Gastrocnemius medialis (tissue), 4 donors: ENCODE measurements at regions of chr2 and their contacts with region 1.

Region 1: GRCh38 chr2:120343433-120344105 is 2.4 kb upstream of the INHBB start:
- DNase-seq: peak; percentile 76 to 83
- ATAC-seq: peak; percentile 69 to 70
- H3K4me3 ChIP-seq: peak overlapping the region; percentile 58 to 75 (median 60)
- H3K27ac ChIP-seq: peak overlapping the region in 3 of 4 donors; percentile 52 to 79 (median 63)
- H3K4me1 ChIP-seq: peaks cover 17 to 25% of the 10 kb centered on the region in 2 donors
- H3K27me3 ChIP-seq: peaks cover 23 to 39% (median 38%) of the 10 kb centered on the region in 3 donors
- CTCF ChIP-seq: peak; percentile 89 to 94 (median 93)
- POLR2A ChIP-seq: no peak

Region 2: GRCh38 chr2:119943058-119943457 is 400.5 kb before region 1 on chr2:
- in situ Hi-C with region 1: no loop called
- intact Hi-C with region 1: no loop called
- DNase-seq: no peak
- ATAC-seq: no peak
- H3K4me3 ChIP-seq: no peak overlapping the region
- H3K27ac ChIP-seq: no peak overlapping the region
- H3K4me1 ChIP-seq: peaks cover 21 to 28% of the 10 kb centered on the region in 2 donors
- H3K27me3 ChIP-seq: no peaks in the 10 kb centered on the region
- CTCF ChIP-seq: no peak
- POLR2A ChIP-seq: no peak

Region 3: GRCh38 chr2:120419073-120419472 is 75.5 kb after region 1 on chr2:
- in situ Hi-C with region 1: no loop called
- intact Hi-C with region 1: loop called (anchors 2 kb)
- DNase-seq: peak in 1 of 2 donors; percentile 30
- ATAC-seq: peak; percentile 53 to 58
- H3K4me3 ChIP-seq: no peak overlapping the region
- H3K27ac ChIP-seq: no peak overlapping the region
- H3K4me1 ChIP-seq: peaks cover 0 to 5% of the 10 kb centered on the region in 2 donors
- H3K27me3 ChIP-seq: no peaks in the 10 kb centered on the region
- CTCF ChIP-seq: peak in 2 of 5 experiments; percentile 24 to 39
- POLR2A ChIP-seq: no peak

Region 4: GRCh38 chr2:120456867-120457266 is 113.3 kb after region 1 on chr2:
- in situ Hi-C with region 1: no loop called
- intact Hi-C with region 1: loop called (anchors 5 kb)
- DNase-seq: no peak
- ATAC-seq: no peak
- H3K4me3 ChIP-seq: no peak overlapping the region
- H3K27ac ChIP-seq: no peak overlapping the region
- H3K4me1 ChIP-seq: no peaks in the 10 kb centered on the region
- H3K27me3 ChIP-seq: no peaks in the 10 kb centered on the region
- CTCF ChIP-seq: no peak
- POLR2A ChIP-seq: no peak

Region 5: DNA sequence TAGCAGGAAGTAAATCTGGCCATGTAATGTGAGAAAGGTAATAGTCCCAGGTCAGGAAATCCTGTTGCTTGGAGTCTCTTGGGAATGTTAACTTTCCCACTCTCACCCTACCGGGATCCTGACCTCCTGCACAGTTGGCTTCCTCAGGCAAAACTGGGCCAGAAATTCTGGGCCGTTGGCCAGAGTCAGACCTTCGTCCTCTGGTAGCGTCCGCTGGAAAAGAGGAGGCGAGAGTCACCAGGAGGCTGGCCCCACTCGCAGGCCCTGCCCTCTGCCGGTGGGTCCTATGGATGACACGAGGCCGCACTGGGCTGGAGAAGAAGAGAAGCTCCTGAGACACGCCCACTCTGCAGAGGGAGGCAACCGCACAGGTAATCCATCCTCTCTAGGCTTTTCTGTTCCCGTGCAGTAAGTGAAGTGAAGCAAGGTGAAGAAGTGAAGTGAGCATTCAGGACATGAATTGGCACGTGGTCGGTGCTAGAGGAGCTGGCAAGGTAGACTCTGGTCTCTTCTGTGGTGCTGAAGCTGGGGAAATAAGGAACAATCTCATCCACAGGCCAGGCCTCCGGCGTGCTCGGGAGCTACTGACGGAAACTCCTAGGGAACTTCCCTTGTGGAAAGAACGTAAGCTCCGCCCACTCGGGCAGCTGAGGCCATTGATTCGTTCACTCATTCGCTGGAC is 209.4 kb after region 1 on chr2:
- in situ Hi-C with region 1: loop called (anchors 10 to 25 kb)
- intact Hi-C with region 1: loop called (anchors 1 kb)
- DNase-seq: peak; percentile 91 to 97
- ATAC-seq: peak; percentile 77 to 86
- H3K4me3 ChIP-seq: no peak overlapping the region
- H3K27ac ChIP-seq: peak overlapping the region; percentile 65 to 83 (median 76)
- H3K4me1 ChIP-seq: peaks cover 39 to 55% of the 10 kb centered on the region in 2 donors
- H3K27me3 ChIP-seq: no peaks in the 10 kb centered on the region
- CTCF ChIP-seq: peak; percentile 90 to 94 (median 92)
- POLR2A ChIP-seq: peak in 1 of 2 donors; percentile 39

Region 6: DNA sequence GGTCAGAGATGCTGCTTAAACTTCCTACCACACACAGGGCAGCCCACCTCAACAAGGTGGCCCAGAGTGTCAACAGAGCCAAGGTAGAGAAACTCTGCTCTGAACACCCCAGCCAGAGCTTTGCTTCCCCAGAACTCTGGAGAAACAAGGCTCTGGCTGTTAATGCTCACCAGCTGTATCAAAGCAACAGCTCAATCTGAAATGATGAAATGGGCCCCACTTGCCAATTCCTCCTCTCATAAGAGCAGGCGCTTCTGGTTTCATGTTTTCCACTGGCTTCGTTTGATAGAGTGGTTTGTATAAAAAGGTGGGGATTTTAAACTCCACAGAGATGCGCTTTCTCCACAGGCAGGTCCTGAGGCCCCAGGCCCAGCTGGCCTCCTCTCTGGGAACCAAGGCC is 1002.3 kb after region 1 on chr2:
- in situ Hi-C with region 1: no loop called
- intact Hi-C with region 1: loop called (anchors 5 kb)
- DNase-seq: peak; percentile 49 to 66
- ATAC-seq: peak; percentile 74 to 84
- H3K4me3 ChIP-seq: no peak overlapping the region
- H3K27ac ChIP-seq: peak overlapping the region; percentile 74 to 80 (median 78)
- H3K4me1 ChIP-seq: peaks cover 9 to 28% of the 10 kb centered on the region in 2 donors
- H3K27me3 ChIP-seq: no peaks in the 10 kb centered on the region
- CTCF ChIP-seq: no peak
- POLR2A ChIP-seq: no peak